ENCODE measurements at regions of chr20 and their contacts with region 1.

Region 1: DNA sequence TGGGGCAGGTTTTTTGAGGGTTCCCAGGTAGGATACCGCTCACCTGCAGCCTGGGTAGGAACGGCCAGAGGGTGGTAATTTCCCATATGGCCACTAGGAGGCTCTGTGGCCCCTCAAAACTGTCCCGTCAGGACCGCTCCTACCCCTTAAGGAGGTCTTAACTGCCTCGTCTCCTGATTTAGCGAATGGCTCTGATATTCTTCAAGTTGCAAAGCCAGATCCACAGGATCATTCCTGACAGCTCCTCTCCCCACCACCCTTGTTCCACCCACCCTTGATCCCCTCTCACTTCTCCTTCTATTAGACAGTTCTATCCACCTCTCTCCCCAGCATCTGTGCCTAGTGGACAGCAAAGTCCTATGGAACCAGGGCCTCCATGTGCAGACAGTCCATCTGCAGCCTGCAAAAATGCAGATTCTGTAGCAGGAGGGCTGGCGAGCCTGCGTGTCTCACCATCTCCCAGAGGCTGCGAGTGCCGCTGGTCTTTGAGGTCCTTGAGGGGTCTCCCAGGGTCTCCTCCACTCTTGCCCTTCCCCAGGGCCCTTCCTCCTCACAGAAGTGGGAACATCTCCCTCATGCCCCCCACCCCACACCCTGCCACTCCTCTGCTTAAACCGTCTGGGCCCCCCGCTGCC is 34.3 kb upstream of the ZBP1 start:
- DNase-seq: peak in 1 of 2 donors; percentile 78
- H3K4me3 ChIP-seq: no peak overlapping the region
- H3K27ac ChIP-seq: peak overlapping the region; percentile 10 to 71
- H3K4me1 ChIP-seq: peaks cover 0 to 43% (median 16%) of the 10 kb centered on the region in 4 donors
- H3K27me3 ChIP-seq: no peaks in the 10 kb centered on the region
- CTCF ChIP-seq: peak; percentile 90 to 96

Region 2: GRCh38 chr20:57968081-57968480 is 313.6 kb after region 1 on chr20:
- intact Hi-C with region 1: loop called (anchors 5 kb)
- DNase-seq: no peak
- H3K4me3 ChIP-seq: no peak overlapping the region
- H3K27ac ChIP-seq: no peak overlapping the region
- H3K4me1 ChIP-seq: peaks cover 6 to 33% (median 21%) of the 10 kb centered on the region in 4 donors
- H3K27me3 ChIP-seq: no peaks in the 10 kb centered on the region
- CTCF ChIP-seq: no peak

Region 3: DNA sequence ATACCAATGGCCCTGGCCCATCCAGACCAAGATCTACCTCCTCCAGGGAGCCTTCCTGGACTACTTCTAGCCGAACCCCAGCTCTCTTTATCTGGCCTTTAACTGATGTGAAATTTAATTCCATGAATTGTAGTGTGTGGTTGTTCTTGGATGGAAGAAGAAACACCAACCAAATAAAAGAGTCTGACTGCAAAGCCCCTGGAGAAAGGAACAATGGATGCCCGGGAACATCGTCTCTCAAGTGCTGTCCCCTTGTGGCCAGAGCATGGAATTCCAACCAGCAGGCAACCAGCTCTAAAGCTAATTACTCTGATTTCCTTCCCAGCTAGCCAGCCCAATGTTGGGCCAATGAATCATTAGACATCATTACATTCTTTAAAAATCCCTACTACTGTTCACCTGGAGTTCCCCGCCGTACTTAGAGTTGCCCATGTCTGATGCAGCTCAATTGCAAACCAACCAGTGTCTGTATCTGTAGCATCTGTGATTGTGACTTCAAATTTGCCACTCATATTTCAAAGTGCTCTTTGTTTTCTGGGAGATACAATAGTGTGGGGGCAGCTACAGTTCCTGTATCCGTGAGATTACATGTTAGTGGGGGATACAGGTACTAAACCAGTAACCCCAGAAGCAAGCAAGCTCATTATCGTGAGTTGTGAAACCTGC is 432.8 kb after region 1 on chr20:
- intact Hi-C with region 1: loop called (anchors 5 kb)
- DNase-seq: peak in 1 of 2 donors; percentile 62
- H3K4me3 ChIP-seq: no peak overlapping the region
- H3K27ac ChIP-seq: no peak overlapping the region
- H3K4me1 ChIP-seq: peaks cover 0 to 2% (median 0%) of the 10 kb centered on the region in 4 donors
- H3K27me3 ChIP-seq: no peaks in the 10 kb centered on the region
- CTCF ChIP-seq: peak; percentile 83 to 85

Measured in tibial artery (tissue), 4 donors.